Esophagus muscularis mucosa (tissue), 4 donors: ENCODE measurements at regions of chr3 and their contacts with region 1.

Region 1: DNA sequence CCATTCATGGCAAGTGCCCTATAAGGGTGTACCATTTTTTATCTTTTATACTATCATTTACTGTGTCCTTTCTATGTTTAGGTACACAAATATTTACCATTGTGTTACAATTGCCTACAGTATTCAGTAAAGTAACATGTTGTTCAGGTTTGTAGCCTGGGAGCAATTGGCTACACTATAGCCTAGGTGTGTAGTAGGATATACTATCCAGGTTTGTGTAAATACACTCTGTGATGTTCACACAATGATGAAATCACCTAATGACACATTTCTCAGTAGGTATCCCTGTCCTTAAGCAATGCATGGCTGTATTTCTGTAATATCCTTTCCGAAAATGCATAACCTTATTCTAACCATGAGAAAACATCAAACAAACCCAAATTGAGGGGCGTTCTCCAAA is 17.9 kb upstream of the CNOT10 start:
- DNase-seq: no peak
- H3K4me3 ChIP-seq: no peak overlapping the region
- H3K27ac ChIP-seq: no peak overlapping the region
- H3K4me1 ChIP-seq: no peaks in the 10 kb centered on the region
- H3K27me3 ChIP-seq: peaks cover 0 to 17% (median 0%) of the 10 kb centered on the region in 4 donors
- CTCF ChIP-seq: no peak
- EP300 ChIP-seq: no peak
- POLR2A ChIP-seq: no peak

Region 2: GRCh38 chr3:32374788-32375595 is 292.1 kb before region 1 on chr3:
- intact Hi-C with region 1: loop called (anchors 10 kb)
- DNase-seq: no peak
- H3K4me3 ChIP-seq: no peak overlapping the region
- H3K27ac ChIP-seq: no peak overlapping the region
- H3K4me1 ChIP-seq: peaks cover 0 to 5% (median 0%) of the 10 kb centered on the region in 4 donors
- H3K27me3 ChIP-seq: no peaks in the 10 kb centered on the region
- CTCF ChIP-seq: peak; percentile 61 to 71 (median 69)
- EP300 ChIP-seq: no peak
- POLR2A ChIP-seq: no peak

Region 3: GRCh38 chr3:32510075-32510724 is 156.9 kb before region 1 on chr3:
- intact Hi-C with region 1: loop called (anchors 2 kb)
- DNase-seq: no peak
- H3K4me3 ChIP-seq: no peak overlapping the region
- H3K27ac ChIP-seq: no peak overlapping the region
- H3K4me1 ChIP-seq: peaks cover 0 to 6% (median 0%) of the 10 kb centered on the region in 4 donors
- H3K27me3 ChIP-seq: no peaks in the 10 kb centered on the region
- CTCF ChIP-seq: peak; percentile 59 to 67 (median 66)
- EP300 ChIP-seq: no peak
- POLR2A ChIP-seq: no peak

Region 4: GRCh38 chr3:32603064-32603463 is 64.1 kb before region 1 on chr3:
- intact Hi-C with region 1: no loop called
- DNase-seq: peak; percentile 66
- H3K4me3 ChIP-seq: no peak overlapping the region
- H3K27ac ChIP-seq: no peak overlapping the region
- H3K4me1 ChIP-seq: no peaks in the 10 kb centered on the region
- H3K27me3 ChIP-seq: no peaks in the 10 kb centered on the region
- CTCF ChIP-seq: no peak
- EP300 ChIP-seq: no peak
- POLR2A ChIP-seq: no peak

Region 5: DNA sequence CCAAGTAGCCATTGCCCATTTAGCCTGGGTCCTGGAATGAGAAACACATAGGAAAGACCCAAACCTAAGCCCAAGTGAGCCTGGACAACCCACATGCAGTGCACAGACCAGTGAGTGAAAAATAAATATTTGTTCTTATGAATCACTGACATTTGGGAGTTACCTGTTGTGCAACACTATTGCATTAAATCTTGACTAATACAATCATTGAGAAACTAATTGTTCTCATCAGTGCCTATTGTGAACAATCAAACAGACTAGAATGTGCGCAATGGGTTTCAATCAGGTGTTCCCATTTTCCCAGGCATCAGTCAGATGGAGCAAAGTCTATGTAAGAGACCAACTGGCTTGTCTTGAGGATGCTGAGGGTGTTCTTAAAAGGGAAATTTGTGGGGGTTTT is 36.9 kb before region 1 on chr3:
- intact Hi-C with region 1: no loop called
- DNase-seq: no peak
- H3K4me3 ChIP-seq: no peak overlapping the region
- H3K27ac ChIP-seq: no peak overlapping the region
- H3K4me1 ChIP-seq: no peaks in the 10 kb centered on the region
- H3K27me3 ChIP-seq: peaks cover 0 to 7% (median 0%) of the 10 kb centered on the region in 4 donors
- CTCF ChIP-seq: no peak
- EP300 ChIP-seq: no peak
- POLR2A ChIP-seq: no peak